ENCODE measurements at regions of chr14 and their contacts with region 1.

Region 1: DNA sequence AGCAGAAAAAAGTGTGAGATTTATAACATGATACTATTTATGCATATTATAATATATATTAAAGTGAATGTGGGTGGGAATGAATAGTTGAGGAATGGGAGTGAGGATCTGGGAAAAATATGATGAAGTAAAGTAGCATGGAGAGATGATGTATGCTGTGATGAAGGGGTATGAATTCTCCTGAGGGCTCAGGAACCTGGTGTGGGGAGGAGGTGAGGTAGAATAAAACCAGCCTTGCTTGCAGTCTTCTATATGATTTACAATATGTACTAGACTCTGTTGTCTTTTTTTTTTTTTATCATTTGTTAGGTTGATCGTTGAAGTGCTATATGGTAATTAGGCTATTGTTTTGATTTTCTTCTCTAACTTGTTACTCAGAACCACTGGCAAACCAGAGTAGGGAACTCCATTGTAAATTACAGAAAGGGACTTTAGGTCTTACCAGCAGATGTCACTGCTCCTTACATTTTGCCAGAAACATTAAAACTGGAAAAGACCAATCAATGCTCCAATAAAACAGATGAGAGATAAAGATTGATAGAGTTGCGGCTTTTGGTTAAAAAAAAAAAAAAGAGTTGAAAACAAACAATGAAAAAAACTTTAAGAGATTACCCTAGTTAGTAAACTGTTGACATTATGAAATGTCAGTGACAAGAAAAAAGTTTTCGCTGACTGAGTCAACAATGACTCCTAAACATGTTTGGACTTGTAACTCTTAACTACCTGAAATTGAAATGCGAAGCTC is 39.9 kb downstream of the ATL1 start:
- DNase-seq: peak; percentile 32

Region 2: GRCh38 chr14:50335389-50335788 is 264.5 kb before region 1 on chr14:
- CTCF ChIA-PET with region 1: no interaction called
- POLR2A ChIA-PET with region 1: no interaction called
- DNase-seq: peak; percentile 70

Region 3: GRCh38 chr14:50616275-50616674 is 16.4 kb after region 1 on chr14:
- CTCF ChIA-PET with region 1: interaction called, 11 read pairs
- POLR2A ChIA-PET with region 1: no interaction called
- DNase-seq: no peak

Measured in HEK293T (cell line).